Activated CD4-positive, alpha-beta T cell treated with anti-CD3 and anti-CD28 coated beads, Interleukin-2, amount 10 ng/mL, durations not matched to agents 7 days and 5 days (primary cell): ENCODE measurements at regions of chr12 and their contacts with region 1.

Region 1: DNA sequence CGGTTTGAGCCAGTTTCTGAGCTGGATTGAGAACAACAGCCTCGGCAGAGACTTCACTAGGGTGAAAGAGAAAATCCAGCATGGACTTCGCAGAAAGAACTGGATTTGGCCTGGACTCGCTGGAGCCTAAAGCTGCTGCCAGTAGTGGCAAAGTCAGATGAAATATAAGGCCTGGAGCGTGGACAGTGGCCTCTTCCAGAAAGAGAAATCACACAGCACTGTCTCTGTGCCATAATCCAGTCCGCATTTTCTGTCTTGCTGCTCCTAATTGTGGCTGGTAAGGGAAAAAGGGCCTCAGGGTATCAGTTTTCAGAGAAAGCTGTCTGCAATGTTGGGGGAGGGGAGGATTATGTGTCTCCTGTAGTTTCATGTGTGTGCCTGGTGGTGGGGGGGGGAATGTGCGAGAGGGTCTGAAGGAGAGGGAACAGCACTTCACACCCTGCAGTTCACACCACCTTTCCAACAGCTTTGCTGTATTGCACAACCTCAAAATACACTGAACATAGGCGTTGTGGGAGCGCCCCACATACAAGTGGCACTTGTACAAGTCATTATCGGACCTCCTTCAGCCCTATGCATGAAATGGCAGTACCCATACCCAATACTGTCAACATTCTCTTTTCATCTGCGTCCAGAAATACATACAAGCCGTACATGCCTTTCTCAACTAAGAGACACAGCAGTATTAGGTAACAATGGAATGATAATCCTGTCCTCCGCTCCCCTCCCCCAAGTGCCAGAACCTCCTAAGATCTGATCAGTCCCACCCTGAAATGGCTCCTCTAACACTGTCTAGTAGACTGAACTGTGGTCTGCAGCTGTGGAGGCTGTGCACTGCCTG is 107.5 kb upstream of the ATF7IP start:
- DNase-seq: peak; percentile 85
- H3K4me3 Mint-ChIP-seq: peak overlapping the region; percentile 55
- H3K27ac Mint-ChIP-seq: peak overlapping the region; percentile 98
- H3K4me1 Mint-ChIP-seq: peaks cover 58% of the 10 kb centered on the region
- H3K27me3 Mint-ChIP-seq: no peaks in the 10 kb centered on the region

Region 2: GRCh38 chr12:14272956-14273907 is 15.3 kb after region 1 on chr12:
- CTCF ChIA-PET with region 1: interaction called, 11 read pairs
- POLR2A ChIA-PET with region 1: no interaction called
- DNase-seq: no peak
- H3K4me3 Mint-ChIP-seq: no peak overlapping the region
- H3K27ac Mint-ChIP-seq: peak overlapping the region; percentile 10
- H3K4me1 Mint-ChIP-seq: peaks cover 26% of the 10 kb centered on the region
- H3K27me3 Mint-ChIP-seq: no peaks in the 10 kb centered on the region

Region 3: GRCh38 chr12:14365294-14366208 is 107.6 kb after region 1 on chr12 and contains the start of gene ATF7IP:
- CTCF ChIA-PET with region 1: interaction called, 6 read pairs
- POLR2A ChIA-PET with region 1: interaction called, 13 read pairs
- DNase-seq: peak; percentile 98
- H3K4me3 Mint-ChIP-seq: peak within 1 kb of the TSS; percentile 90
- H3K27ac Mint-ChIP-seq: peak within 1 kb of the TSS; percentile 99
- H3K4me1 Mint-ChIP-seq: peaks cover 28% of the 10 kb centered on the region
- H3K27me3 Mint-ChIP-seq: no peaks in the 10 kb centered on the region
- total RNA-seq, gene ATF7IP: 96.7 to 108 TPM

Region 4: GRCh38 chr12:14394317-14395073 is 136.5 kb after region 1 on chr12:
- CTCF ChIA-PET with region 1: interaction called, 8 read pairs
- POLR2A ChIA-PET with region 1: interaction called, 19 read pairs
- DNase-seq: peak; percentile 61
- H3K4me3 Mint-ChIP-seq: peak overlapping the region; percentile 80
- H3K27ac Mint-ChIP-seq: peak overlapping the region; percentile 95
- H3K4me1 Mint-ChIP-seq: peaks cover 87% of the 10 kb centered on the region
- H3K27me3 Mint-ChIP-seq: no peaks in the 10 kb centered on the region

Region 5: GRCh38 chr12:14643251-14643650 is 385.3 kb after region 1 on chr12:
- CTCF ChIA-PET with region 1: no interaction called
- POLR2A ChIA-PET with region 1: no interaction called
- DNase-seq: peak; percentile 37
- H3K4me3 Mint-ChIP-seq: peak overlapping the region; percentile 27
- H3K27ac Mint-ChIP-seq: peak overlapping the region; percentile 68
- H3K4me1 Mint-ChIP-seq: peaks cover 24% of the 10 kb centered on the region
- H3K27me3 Mint-ChIP-seq: peaks cover 5% of the 10 kb centered on the region